ACHN (cell line): ENCODE measurements at regions of chr7 and their contacts with region 1.

Region 1: DNA sequence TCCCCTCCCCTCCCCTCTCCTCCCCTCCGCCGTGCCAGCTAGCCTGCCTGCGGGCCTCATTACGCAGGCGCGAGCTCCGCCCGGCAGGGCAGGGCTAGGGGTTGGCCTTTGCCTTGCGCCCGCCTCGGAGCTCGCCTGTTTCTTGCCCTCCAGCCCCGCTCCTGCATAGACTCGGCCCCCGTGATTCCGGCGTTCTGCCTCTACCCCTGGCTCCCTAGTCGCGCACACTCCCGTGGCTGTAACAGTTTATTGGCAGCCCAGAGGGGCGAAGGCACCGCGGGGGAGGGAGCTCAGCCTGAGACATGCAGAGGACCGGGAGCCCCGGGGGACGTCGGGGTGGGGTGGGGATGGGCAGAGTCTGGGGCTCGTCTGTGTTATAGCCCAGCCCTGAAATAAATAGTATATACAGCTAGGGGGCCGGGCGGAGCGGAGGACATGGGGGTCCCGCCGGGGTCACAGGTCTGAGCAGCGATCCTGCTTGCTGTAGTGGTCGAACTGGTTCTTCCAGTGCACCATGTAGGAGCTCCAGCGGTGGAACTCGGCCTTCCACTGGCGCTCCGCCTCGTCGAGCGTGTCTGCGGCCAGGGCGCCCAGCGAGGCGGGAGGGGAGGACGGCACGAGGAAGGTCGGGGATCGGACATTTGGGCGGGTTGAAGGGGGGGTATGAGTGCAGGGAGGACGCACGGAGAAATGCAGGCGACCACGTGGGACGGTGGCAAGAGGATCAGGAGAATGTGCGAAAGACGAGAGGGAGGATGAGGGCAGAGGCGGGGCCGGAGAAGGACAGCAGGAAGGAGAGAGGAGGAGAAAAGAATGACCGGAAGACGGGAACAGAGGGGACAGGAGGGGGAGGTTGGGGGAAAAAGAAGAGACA is 483 bp upstream of the UFSP1 start:
- DNase-seq: peak; percentile 98

Region 2: GRCh38 chr7:100837099-100837836 is 52.7 kb before region 1 on chr7:
- in situ Hi-C with region 1: no loop called
- DNase-seq: peak; percentile 92

Region 3: GRCh38 chr7:101058355-101058754 is 168.4 kb after region 1 on chr7:
- in situ Hi-C with region 1: loop called (anchors 10 kb)
- DNase-seq: peak; percentile 74

Region 4: GRCh38 chr7:101143039-101143438 is 253.0 kb after region 1 on chr7:
- in situ Hi-C with region 1: no loop called
- DNase-seq: no peak